ENCODE measurements at regions of chr14 and their contacts with region 1.

Region 1: DNA sequence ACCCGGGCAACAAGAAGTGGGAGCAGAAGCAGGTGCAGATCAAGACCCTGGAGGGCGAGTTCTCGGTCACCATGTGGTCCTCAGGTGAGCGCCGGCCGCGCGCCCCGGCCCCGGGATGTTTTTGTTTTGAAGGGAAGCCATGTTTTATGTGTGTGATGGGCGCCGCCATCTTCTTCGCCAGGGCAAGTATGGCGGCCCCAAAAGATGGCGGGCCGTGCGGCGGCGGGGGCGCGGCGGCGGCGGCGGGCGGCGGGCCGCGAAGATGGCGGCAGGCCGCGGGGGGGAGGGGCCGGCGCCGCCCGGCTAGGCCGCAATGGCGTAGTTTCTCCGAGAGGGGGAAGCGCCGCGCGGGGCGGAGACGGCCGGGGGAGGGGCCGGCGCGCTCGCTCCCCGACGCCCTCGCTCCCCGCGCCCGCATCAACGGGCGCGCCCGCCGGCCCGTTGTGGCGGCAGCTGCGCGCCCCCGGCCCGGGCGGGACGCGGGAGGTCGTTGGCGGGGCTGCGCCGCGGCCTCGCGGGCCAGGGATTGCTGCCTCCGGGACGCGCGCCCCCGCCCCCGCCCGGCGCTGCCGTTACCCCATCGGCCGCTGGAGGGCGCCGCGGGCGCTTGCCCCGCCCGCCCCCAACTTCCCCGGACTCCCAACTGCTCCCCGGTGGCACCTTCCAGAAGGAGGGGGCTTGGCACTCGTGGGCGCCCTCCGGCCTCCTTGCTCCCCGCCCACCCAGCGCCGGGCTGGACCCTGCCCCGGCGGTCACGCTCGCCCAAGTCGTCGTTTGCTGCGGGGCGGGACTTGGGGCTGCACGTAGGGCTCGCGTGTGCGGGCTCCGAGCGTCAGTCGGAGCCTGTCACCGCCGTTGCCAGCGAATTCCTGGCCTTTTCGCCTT is 1.1 kb downstream of the YY1 start:
- DNase-seq: peak; percentile 95
- ATAC-seq: peak; percentile 58
- H3K4me3 ChIP-seq: peak overlapping the region; percentile 100
- H3K27ac ChIP-seq: peak overlapping the region; percentile 99
- H3K4me1 ChIP-seq: peaks cover 5% of the 10 kb centered on the region; the same call in 1 of the 2 replicates
- H3K27me3 ChIP-seq: no peaks in the 10 kb centered on the region
- CTCF ChIP-seq: peak; percentile 63
- POLR2A ChIP-seq: peak; percentile 91; the same call in 1 of the 2 replicates
- RAD21 ChIP-seq: no peak

Region 2: GRCh38 chr14:100221533-100222223 is 18.4 kb before region 1 on chr14:
- CTCF ChIA-PET with region 1: no interaction called
- POLR2A ChIA-PET with region 1: no interaction called
- dilution Hi-C with region 1: no loop called
- in situ Hi-C with region 1: no loop called
- intact Hi-C with region 1: loop called (anchors 2 kb)
- DNase-seq: peak; percentile 62
- ATAC-seq: peak; percentile 88
- H3K4me3 ChIP-seq: peak overlapping the region; percentile 57
- H3K27ac ChIP-seq: peak overlapping the region; percentile 59
- H3K4me1 ChIP-seq: peaks cover 18% of the 10 kb centered on the region
- H3K27me3 ChIP-seq: no peaks in the 10 kb centered on the region
- CTCF ChIP-seq: no peak
- POLR2A ChIP-seq: no peak
- RAD21 ChIP-seq: no peak

Region 3: DNA sequence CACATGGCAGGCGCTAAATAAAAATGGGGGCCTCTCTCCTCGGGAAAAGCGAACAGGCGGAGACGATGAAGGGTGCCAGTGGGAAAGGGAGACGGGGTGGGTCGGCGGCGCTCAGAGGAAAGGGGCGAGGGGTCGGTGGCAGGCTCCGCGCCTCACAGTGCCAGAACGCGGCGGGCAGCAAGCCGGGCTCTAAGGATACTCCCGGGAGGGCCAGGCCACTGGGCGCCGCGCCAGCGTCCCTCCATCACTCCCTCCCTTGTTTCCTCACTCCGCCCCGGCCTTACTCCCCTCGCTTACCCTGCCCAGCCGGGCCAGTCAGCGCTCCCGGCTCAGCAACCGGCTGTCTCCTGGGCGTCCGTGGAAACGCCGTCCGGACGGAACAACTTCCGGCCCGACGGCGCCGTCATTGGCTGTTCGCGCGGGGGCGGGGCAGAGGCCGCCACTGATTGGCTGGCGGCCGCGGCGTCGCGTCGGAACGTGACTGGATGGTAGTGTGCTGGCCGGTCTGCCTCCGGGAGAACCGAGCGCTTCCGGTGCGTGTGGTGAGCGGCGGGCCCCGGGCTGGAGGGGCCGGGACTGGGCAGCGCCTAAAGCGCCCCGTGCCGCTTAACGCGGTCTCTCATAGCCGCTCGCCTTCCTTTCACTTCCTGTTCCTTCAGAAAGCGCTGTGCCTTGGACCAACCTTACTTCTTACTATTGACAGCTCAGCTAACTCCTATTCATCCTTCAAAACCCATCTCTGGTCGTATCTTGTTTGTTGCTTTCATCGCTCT is 136.1 kb after region 1 on chr14:
- CTCF ChIA-PET with region 1: no interaction called
- POLR2A ChIA-PET with region 1: no interaction called
- dilution Hi-C with region 1: no loop called
- in situ Hi-C with region 1: no loop called
- intact Hi-C with region 1: loop called (anchors 2 kb)
- DNase-seq: peak; percentile 95
- ATAC-seq: peak; percentile 81
- H3K4me3 ChIP-seq: peak within 1 kb of the TSS; percentile 77
- H3K27ac ChIP-seq: peak within 1 kb of the TSS; percentile 96
- H3K4me1 ChIP-seq: peaks cover 11% of the 10 kb centered on the region
- H3K27me3 ChIP-seq: no peaks in the 10 kb centered on the region
- CTCF ChIP-seq: no peak
- POLR2A ChIP-seq: peak; percentile 96
- RAD21 ChIP-seq: no peak